ENCODE measurements at regions of chr17 and their contacts with region 1.

Region 1: DNA sequence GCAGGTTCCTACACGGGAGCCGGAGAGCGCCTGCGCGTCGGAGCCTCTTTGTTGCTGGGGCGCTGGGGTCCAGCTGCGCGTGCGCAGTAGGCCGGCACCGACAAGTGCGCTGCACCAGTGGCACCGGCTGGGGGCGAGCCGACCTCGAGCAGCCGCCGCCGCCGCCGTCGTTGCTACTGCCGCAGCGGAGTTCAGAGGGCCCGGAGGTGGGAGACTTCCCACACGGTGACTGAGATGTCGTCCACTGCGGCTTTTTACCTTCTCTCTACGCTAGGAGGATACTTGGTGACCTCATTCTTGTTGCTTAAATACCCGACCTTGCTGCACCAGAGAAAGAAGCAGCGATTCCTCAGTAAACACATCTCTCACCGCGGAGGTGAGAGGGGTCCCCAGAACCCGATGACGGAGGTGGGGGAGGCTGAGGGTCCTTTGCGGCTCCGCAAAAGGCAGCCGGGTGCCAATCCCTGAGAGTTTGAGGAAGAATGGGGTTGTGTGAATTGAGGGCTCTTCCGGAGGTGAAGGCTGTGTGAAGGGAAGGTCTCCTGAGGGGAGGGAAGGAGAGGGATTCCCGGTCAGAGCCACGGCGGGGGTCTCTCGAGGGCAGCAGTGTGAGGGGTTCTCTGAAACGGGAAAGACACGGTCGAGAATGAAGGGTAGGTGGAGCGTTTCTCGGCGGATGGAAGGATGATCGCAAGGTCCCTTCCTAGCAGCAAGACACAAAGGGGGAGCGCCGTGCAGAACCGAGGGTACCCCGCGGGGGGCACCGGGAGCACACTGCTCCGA is at the start of gene GDPD1:
- DNase-seq: peak; percentile 90 to 97 (median 95)
- H3K4me3 ChIP-seq: peak within 1 kb of the TSS; percentile 62 to 99 (median 92)
- H3K27ac ChIP-seq: peak within 1 kb of the TSS; percentile 71 to 99 (median 92)
- H3K27me3 ChIP-seq: no peaks in the 10 kb centered on the region
- CTCF ChIP-seq: peak; percentile 62 to 95 (median 83)
- total RNA-seq, gene GDPD1: 20.6 to 54.8 (median 38.9) TPM

Region 2: GRCh38 chr17:59106463-59107305 is 113.9 kb before region 1 on chr17 and contains the start of gene TRIM37:
- intact Hi-C with region 1: loop called in 1 of 2 experiments (anchors 5 kb)
- DNase-seq: peak; percentile 89 to 97 (median 96)
- H3K4me3 ChIP-seq: peak within 1 kb of the TSS; percentile 63 to 100 (median 95)
- H3K27ac ChIP-seq: peak within 1 kb of the TSS; percentile 44 to 98 (median 93)
- H3K27me3 ChIP-seq: no peaks in the 10 kb centered on the region
- CTCF ChIP-seq: peak in 45 of 56 donors; percentile 6 to 66 (median 42)
- total RNA-seq, gene TRIM37: 46.6 to 163 (median 113) TPM

Region 3: GRCh38 chr17:59311130-59311920 is 90.8 kb after region 1 on chr17:
- intact Hi-C with region 1: loop called in 1 of 2 experiments (anchors 5 kb)
- DNase-seq: peak in 2 of 10 donors; percentile 50 to 54
- H3K4me3 ChIP-seq: peak overlapping the region in 3 of 59 donors; percentile 5 to 11 (median 7)
- H3K27ac ChIP-seq: peak overlapping the region in 1 of 59 donors; percentile 19
- H3K27me3 ChIP-seq: no peaks in the 10 kb centered on the region
- CTCF ChIP-seq: peak in 55 of 56 donors; percentile 72 to 99 (median 90)

Region 4: GRCh38 chr17:59347975-59348391 is 127.4 kb after region 1 on chr17:
- intact Hi-C with region 1: no loop called
- DNase-seq: no peak
- H3K4me3 ChIP-seq: no peak overlapping the region
- H3K27ac ChIP-seq: peak overlapping the region in 45 of 59 donors; percentile 5 to 100 (median 48)
- H3K27me3 ChIP-seq: no peaks in the 10 kb centered on the region
- CTCF ChIP-seq: no peak

Region 5: DNA sequence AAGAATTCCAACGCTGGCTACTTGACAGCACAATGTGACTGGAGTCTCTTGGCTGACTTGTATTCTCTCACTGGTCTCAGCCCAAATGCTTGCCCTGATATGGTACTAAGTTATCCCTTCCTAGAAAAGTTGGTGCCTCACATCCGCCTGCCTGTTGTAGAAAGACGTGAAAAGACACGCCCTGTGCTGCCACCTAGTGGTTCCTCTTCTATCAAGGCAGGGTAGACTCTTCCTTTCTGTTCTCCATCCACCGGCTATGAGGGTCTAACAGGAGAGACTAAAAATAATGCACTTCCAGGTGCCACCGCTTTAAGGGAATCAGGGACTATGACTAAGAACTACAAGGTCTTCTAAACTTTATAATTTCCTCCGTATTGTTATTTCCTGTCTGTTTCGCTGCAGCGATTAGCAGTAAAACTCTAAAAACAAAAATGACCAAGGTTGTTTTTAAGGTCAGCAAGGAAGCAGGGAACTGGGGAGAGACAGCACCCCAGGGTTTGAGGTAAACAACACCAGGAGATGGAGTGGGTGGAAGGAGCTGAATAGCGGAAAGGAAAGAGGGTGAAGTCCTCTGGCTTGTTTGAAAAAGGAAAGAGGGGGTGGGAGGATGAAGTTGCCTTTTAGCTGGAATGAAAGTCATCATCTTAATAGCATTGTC is 220.3 kb after region 1 on chr17:
- intact Hi-C with region 1: loop called (anchors 2 to 5 kb)
- DNase-seq: peak; percentile 70 to 96 (median 90)
- H3K4me3 ChIP-seq: peak overlapping the region in 35 of 59 donors; percentile 1 to 51 (median 15)
- H3K27ac ChIP-seq: peak overlapping the region in 57 of 59 donors; percentile 9 to 90 (median 73)
- H3K27me3 ChIP-seq: no peaks in the 10 kb centered on the region
- CTCF ChIP-seq: peak; percentile 74 to 98 (median 93)

Region 6: DNA sequence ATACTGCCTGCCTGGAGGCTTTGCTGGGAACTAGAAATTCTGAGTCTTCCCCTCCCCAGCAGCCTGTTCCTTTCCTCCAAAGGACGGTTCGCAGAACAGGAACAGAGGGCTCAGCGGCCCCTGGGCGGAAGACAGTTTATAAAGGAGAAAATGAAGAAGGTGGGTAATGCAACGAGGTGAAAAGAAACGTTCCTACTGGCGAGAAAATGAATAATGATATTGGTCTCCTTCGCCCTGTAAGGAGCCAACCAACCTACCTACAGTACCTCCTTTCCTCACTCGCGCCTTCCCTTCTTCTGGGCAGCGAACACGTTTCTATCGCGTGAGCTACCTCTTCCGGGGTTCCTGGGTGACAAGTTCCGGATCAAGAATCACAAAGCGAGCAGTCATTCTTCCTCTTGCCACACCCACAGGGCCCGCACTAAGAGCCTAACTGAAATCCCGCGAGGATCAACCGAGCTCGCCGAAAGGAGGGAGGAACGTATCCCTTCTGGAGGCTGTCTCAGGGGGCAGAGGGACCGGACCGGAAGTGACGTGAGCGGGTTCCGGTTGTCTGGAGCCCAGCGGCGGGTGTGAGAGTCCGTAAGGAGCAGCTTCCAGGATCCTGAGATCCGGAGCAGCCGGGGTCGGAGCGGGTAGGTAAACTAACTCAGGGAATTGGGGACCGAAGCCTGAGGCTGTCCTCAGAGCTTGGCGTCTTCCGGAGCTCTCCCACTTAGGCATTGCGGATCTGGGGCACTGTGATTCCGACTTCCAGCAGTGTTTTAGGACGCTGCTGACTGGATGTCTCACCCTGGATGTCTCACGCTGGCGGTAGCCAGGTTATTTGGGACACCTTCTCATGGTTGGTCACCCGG is 486.8 kb after region 1 on chr17 and contains the starts of genes PTRH2 and VMP1:
- intact Hi-C with region 1: loop called in 1 of 2 experiments (anchors 10 kb)
- DNase-seq: peak; percentile 97 to 100 (median 98)
- H3K4me3 ChIP-seq: peak within 1 kb of the TSS; percentile 37 to 100 (median 91)
- H3K27ac ChIP-seq: peak within 1 kb of the TSS; percentile 6 to 96 (median 86)
- H3K27me3 ChIP-seq: no peaks in the 10 kb centered on the region
- CTCF ChIP-seq: peak in 29 of 56 donors; percentile 10 to 58 (median 33)
- total RNA-seq, gene PTRH2: 9.8 to 28.4 (median 20.0) TPM
- total RNA-seq, gene VMP1: 80.9 to 231 (median 127) TPM

Measured in dorsolateral prefrontal cortex (tissue), 120 donors.